PC-3 (cell line): ENCODE measurements at regions of chr3 and their contacts with region 1.

Region 1: DNA sequence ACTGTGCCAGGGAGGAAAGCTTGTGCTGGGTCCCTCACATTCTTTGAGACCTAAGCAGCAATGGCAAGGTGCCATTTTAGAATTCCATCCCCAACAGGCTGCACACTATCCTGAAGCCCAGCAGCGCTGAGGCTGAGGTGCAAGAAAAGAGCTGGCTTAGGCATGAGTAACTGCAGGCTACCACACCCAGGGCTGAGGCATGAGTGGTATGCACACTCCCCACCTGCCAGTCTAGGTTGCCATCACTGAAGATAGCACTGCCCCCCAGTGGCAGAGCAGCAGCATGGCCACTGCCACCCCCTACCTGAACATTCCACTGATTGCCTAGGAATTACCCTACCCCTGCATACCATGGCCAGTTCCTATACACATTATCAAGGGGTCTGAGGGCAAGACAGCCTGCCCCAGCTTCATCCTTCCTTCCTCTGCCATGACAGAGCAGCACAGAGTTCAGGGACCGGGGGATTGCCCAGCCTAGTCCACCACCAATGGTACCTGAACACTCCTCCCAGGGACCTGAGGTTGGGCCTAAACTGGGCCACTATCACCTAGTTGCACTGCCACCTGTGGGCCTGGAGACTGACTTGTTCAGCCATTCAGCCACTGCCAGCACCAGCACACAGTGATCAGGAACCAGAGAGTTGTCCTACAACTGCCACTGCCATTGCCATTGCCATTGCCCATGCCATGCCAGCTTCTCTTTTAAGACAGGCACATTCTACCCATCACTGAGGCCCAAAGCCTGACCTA is 129.8 kb downstream of the SATB1 start:
- DNase-seq: peak; percentile 97
- ATAC-seq: peak; percentile 100
- H3K4me3 ChIP-seq: no peak overlapping the region
- H3K27ac ChIP-seq: peak overlapping the region; percentile 31
- H3K4me1 ChIP-seq: peaks cover 10% of the 10 kb centered on the region
- H3K27me3 ChIP-seq: no peaks in the 10 kb centered on the region
- CTCF ChIP-seq: peak; percentile 96

Region 2: GRCh38 chr3:17645072-17645698 is 650.2 kb before region 1 on chr3:
- CTCF ChIA-PET with region 1: no interaction called
- POLR2A ChIA-PET with region 1: no interaction called
- intact Hi-C with region 1: loop called (anchors 2 kb)
- DNase-seq: peak; percentile 85
- ATAC-seq: peak; percentile 89
- H3K4me3 ChIP-seq: no peak overlapping the region
- H3K27ac ChIP-seq: no peak overlapping the region
- H3K4me1 ChIP-seq: peaks cover 4% of the 10 kb centered on the region; the same call in 1 of the 2 replicates
- H3K27me3 ChIP-seq: no peaks in the 10 kb centered on the region
- CTCF ChIP-seq: peak; percentile 85

Region 3: GRCh38 chr3:17894434-17895060 is 400.8 kb before region 1 on chr3:
- CTCF ChIA-PET with region 1: interaction called, 7 read pairs
- POLR2A ChIA-PET with region 1: interaction called, 6 read pairs
- intact Hi-C with region 1: loop called (anchors 1 kb)
- DNase-seq: peak; percentile 73
- ATAC-seq: peak; percentile 85
- H3K4me3 ChIP-seq: no peak overlapping the region
- H3K27ac ChIP-seq: no peak overlapping the region
- H3K4me1 ChIP-seq: peaks cover 13% of the 10 kb centered on the region
- H3K27me3 ChIP-seq: no peaks in the 10 kb centered on the region
- CTCF ChIP-seq: peak; percentile 78

Region 4: DNA sequence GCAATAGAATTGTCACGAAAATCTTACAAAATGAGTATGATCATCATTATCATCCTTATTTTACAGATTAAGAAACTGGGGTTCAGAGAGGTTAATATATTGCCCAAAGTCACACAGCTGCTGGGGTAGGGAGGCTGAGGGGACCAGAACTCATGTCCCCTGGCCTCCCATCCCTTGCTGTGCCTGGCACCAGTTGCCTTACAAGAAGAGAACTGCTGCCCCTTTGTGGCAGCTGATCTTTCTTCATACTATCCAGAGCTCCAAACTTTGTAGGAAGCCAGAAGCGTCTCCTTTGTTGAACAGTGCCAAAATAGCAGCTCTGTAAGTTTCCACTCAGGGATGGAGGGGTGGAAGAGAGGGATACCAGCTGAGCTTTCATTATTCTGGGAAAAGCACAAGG is 316.1 kb before region 1 on chr3:
- CTCF ChIA-PET with region 1: no interaction called
- POLR2A ChIA-PET with region 1: no interaction called
- intact Hi-C with region 1: loop called (anchors 1 kb)
- DNase-seq: peak; percentile 35
- ATAC-seq: peak; percentile 77
- H3K4me3 ChIP-seq: no peak overlapping the region
- H3K27ac ChIP-seq: no peak overlapping the region
- H3K4me1 ChIP-seq: peaks cover 7% of the 10 kb centered on the region; the same call in 1 of the 2 replicates
- H3K27me3 ChIP-seq: no peaks in the 10 kb centered on the region
- CTCF ChIP-seq: peak; percentile 46; the same call in 1 of the 2 replicates

Region 5: DNA sequence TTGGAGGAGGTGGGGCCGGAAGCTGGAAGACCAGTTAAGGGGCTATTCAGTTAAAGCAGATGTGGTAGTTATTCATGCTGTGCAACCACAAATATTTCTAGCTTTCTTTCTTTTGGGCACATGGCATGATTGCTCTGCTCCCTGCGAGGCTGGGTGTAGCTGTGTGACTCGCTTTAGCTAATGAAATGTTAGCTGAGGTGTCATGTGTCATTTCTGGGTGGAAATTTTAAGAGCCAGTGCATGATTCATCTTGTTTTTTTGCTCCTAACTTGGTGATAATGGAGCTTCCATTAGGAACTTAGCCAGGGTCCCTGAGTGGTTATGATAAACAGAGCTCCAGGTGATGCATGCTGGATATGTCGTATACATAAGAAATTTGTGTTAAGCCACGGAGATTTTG is 170.8 kb before region 1 on chr3:
- CTCF ChIA-PET with region 1: no interaction called
- POLR2A ChIA-PET with region 1: no interaction called
- intact Hi-C with region 1: no loop called
- DNase-seq: peak; percentile 76
- ATAC-seq: peak; percentile 93
- H3K4me3 ChIP-seq: no peak overlapping the region
- H3K27ac ChIP-seq: peak overlapping the region; percentile 25
- H3K4me1 ChIP-seq: peaks cover 11% of the 10 kb centered on the region
- H3K27me3 ChIP-seq: no peaks in the 10 kb centered on the region
- CTCF ChIP-seq: no peak

Region 6: GRCh38 chr3:18351823-18352744 is 56.7 kb after region 1 on chr3:
- CTCF ChIA-PET with region 1: no interaction called
- POLR2A ChIA-PET with region 1: no interaction called
- intact Hi-C with region 1: no loop called
- DNase-seq: peak; percentile 4
- ATAC-seq: no peak; the same call in 1 of the 2 replicates
- H3K4me3 ChIP-seq: no peak overlapping the region
- H3K27ac ChIP-seq: no peak overlapping the region
- H3K4me1 ChIP-seq: 0 out of 2 replicates have a peak, but pooled peaks cover 5% of the 10 kb centered on the region
- H3K27me3 ChIP-seq: no peaks in the 10 kb centered on the region
- CTCF ChIP-seq: no peak

Region 7: DNA sequence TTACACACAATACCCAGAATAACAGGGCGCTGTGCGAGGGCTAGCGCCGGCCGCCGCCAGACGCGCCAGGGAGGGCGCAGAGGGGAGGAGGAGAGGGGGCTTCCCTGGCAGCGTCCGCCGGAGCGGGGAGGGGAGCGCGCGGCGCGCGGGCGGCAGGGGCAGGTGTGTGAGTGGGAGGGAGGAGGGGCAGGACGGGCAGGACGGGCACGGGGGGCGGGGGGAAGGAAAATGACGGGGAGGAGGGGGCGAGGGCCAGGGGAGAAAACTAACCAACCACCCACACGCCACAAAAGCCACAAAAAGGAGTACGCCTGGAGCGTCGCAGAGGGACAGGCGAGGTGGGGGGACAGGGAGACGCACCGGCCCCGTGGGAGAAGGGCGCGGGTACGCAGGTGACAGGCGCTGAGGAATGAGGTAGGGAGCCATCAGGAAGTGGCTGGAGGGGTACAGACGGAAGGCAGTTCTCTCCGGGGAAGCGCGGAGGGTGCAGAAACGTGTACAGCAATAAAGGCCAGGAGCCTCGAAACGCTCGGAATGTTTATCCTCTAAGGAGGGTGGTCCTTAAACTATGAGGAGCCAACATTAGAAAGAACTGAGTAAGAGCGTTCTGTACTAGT is 130.4 kb after region 1 on chr3:
- CTCF ChIA-PET with region 1: no interaction called
- POLR2A ChIA-PET with region 1: no interaction called
- intact Hi-C with region 1: no loop called
- DNase-seq: peak; percentile 41
- ATAC-seq: peak; percentile 35
- H3K4me3 ChIP-seq: peak overlapping the region; percentile 85
- H3K27ac ChIP-seq: no peak overlapping the region
- H3K4me1 ChIP-seq: peaks cover 13% of the 10 kb centered on the region; the same call in 1 of the 2 replicates
- H3K27me3 ChIP-seq: no peaks in the 10 kb centered on the region
- CTCF ChIP-seq: no peak